Naive thymus-derived CD4-positive, alpha-beta T cell (primary cell): ENCODE measurements at regions of chr1 and their contacts with region 1.

Region 1: DNA sequence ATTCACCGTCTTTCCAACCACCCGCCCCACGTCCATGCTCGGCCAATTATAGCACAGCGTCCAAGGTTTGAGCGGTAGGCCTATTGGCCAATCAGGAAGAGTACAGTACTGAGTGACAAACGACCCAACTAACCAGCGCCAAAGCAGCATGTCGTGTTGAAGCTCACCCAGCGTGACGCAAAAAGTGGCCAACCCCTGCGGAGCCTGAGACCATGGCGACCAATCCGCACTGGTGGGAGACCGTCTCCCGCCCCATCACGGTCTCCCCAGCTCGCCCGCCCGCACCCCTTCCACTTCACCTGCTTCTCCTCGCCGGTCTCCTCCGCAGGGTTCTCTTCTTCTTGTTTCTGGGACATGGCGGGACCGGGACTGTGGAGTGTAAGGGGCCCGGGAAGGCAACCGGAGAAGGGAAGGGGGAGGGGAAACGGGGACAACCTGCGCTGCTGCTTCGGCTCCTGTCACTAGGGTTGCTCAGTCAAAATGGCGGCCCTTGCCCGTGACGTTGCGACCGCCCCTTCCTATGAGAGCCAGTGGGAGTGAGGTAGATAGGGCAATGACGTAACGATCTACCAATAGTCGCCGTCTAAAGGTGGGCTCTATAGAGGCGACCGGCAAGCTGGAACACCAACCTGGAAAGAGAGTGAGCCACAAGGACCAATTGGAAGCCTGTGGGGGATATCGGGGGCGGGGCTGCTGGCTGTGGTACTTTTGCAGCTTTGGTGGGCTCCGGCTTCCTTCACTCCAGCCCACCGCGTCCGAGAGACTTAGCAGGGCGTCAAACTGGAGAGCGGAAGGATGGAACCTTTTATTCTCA is at the start of gene ENSA:
- DNase-seq: peak; percentile 85 to 99 (median 98)
- ATAC-seq: peak; percentile 91
- H3K4me3 ChIP-seq: peak within 1 kb of the TSS; percentile 88
- H3K4me3 Mint-ChIP-seq: no peak within 1 kb of the TSS
- H3K27ac ChIP-seq: peak within 1 kb of the TSS; percentile 98
- H3K27ac Mint-ChIP-seq: peak within 1 kb of the TSS in 2 of 9 donors; percentile 4 to 71
- H3K4me1 ChIP-seq: peaks cover 15 to 18% of the 10 kb centered on the region in 2 donors
- H3K4me1 Mint-ChIP-seq: peaks cover 0 to 40% (median 17%) of the 10 kb centered on the region in 7 donors
- H3K27me3 ChIP-seq: no peaks in the 10 kb centered on the region
- H3K27me3 Mint-ChIP-seq: no peaks in the 10 kb centered on the region
- total RNA-seq, gene ENSA: 97.2 to 178 (median 157) TPM

Region 2: DNA sequence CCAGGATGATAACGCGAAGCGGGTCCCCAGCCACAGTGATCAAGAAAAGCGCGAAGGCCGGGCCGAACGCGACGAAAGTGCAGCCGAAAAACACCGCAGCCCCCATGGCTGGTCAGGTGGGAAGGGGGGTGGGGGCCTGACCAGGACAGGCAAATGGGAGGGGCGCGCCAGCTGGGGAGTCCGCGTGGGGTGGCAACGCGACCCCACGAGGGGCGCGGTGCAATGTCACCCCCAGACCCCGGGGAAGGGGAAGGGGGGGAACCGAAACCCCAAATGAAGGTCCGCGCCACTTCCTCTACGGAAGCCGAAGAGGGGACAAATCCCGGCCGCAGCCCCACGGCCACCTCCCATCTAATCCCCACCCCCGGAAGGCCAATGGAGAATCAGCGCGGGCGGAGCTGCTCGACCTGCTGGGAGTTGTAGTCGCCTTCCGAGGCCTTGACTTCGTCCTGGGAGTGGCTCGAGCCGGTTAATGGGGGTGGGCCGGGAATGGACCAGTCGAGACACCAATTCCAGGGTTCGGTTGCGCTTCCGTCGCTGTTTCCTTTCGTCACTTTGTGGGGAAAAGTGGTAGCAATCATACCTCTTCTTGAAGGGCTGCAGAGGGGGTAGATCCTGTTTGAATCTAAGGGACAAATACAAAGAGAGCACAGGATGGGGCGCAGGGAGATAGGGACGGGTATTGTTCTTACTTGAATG is 360.5 kb before region 1 on chr1 and contains the start of gene APH1A:
- CTCF ChIA-PET with region 1: no interaction called
- POLR2A ChIA-PET with region 1: no interaction called
- intact Hi-C with region 1: loop called in 1 of 2 experiments (anchors 2 kb)
- DNase-seq: peak; percentile 69 to 92 (median 89)
- ATAC-seq: peak; percentile 97
- H3K4me3 ChIP-seq: peak within 1 kb of the TSS; percentile 87
- H3K4me3 Mint-ChIP-seq: peak within 1 kb of the TSS; percentile 94 to 99 (median 96)
- H3K27ac ChIP-seq: peak within 1 kb of the TSS; percentile 97
- H3K27ac Mint-ChIP-seq: peak within 1 kb of the TSS; percentile 88 to 99 (median 94)
- H3K4me1 ChIP-seq: peaks cover 13 to 20% of the 10 kb centered on the region in 2 donors
- H3K4me1 Mint-ChIP-seq: peaks cover 25 to 39% (median 30%) of the 10 kb centered on the region in 7 donors
- H3K27me3 ChIP-seq: no peaks in the 10 kb centered on the region
- H3K27me3 Mint-ChIP-seq: no peaks in the 10 kb centered on the region
- total RNA-seq, gene APH1A: 112 to 143 (median 127) TPM

Region 3: DNA sequence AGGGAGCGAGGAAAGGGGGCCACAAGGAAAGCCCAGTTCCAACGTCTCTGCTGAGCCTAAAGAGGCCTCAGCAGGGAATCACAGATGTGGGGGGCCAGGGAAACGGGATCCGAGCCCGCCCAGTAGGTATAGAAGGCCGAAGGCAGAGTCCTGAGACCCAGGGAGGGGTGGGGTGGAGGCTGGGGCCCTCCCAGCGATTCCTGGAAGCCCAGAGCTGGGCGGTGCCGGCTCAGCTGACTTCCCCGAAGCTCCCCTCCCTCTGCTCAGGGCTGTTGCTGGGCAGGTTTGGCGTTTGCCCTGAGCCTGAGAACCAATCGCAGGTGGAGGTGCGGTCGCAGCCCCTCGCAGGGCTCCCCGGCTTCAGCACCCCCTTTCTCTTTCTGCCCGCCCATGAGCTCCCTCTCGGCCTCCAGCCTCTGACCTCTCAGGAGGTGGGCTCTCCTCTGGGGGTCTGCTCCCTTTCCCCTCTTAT is 67.3 kb before region 1 on chr1:
- CTCF ChIA-PET with region 1: interaction called, 272 read pairs
- POLR2A ChIA-PET with region 1: interaction called, 254 read pairs
- intact Hi-C with region 1: loop called (anchors 1 to 2 kb)
- DNase-seq: peak; percentile 67 to 89 (median 83)
- ATAC-seq: peak; percentile 58
- H3K4me3 ChIP-seq: peak overlapping the region; percentile 95
- H3K4me3 Mint-ChIP-seq: peak overlapping the region; percentile 87 to 99 (median 97)
- H3K27ac ChIP-seq: peak overlapping the region; percentile 97
- H3K27ac Mint-ChIP-seq: peak overlapping the region; percentile 94 to 100 (median 98)
- H3K4me1 ChIP-seq: peaks cover 47 to 57% of the 10 kb centered on the region in 2 donors
- H3K4me1 Mint-ChIP-seq: peaks cover 26 to 59% (median 51%) of the 10 kb centered on the region in 7 donors
- H3K27me3 ChIP-seq: no peaks in the 10 kb centered on the region
- H3K27me3 Mint-ChIP-seq: no peaks in the 10 kb centered on the region

Region 4: DNA sequence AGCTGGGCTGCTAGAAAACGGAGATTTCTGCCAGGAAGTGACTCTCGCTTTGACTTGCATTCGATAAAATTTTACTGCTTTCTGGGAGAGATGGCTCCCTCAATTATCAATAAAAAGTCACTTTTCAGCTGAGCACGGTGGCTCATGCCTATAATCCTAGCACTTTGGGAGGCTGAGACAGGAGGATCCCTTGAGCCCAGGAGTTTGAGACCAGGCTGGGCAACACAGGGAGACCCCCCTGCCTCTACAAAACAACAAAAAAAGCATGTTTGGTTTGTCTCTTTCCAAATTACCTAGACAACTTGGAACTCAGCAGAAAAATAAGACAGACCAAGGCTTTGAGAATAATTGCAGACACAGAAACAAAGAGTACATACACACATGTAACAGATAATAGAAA is 13.0 kb after region 1 on chr1:
- CTCF ChIA-PET with region 1: no interaction called
- POLR2A ChIA-PET with region 1: interaction called, 10 read pairs
- intact Hi-C with region 1: no loop called
- DNase-seq: no peak
- ATAC-seq: no peak
- H3K4me3 ChIP-seq: no peak overlapping the region
- H3K4me3 Mint-ChIP-seq: no peak overlapping the region
- H3K27ac ChIP-seq: no peak overlapping the region
- H3K27ac Mint-ChIP-seq: no peak overlapping the region
- H3K4me1 ChIP-seq: no peaks in the 10 kb centered on the region
- H3K4me1 Mint-ChIP-seq: no peaks in the 10 kb centered on the region
- H3K27me3 ChIP-seq: no peaks in the 10 kb centered on the region
- H3K27me3 Mint-ChIP-seq: no peaks in the 10 kb centered on the region

Region 5: GRCh38 chr1:150674881-150675280 is 45.6 kb after region 1 on chr1:
- CTCF ChIA-PET with region 1: no interaction called
- POLR2A ChIA-PET with region 1: no interaction called
- intact Hi-C with region 1: no loop called
- DNase-seq: no peak
- ATAC-seq: no peak
- H3K4me3 ChIP-seq: no peak overlapping the region
- H3K4me3 Mint-ChIP-seq: no peak overlapping the region
- H3K27ac ChIP-seq: no peak overlapping the region
- H3K27ac Mint-ChIP-seq: peak overlapping the region in 1 of 9 donors; percentile 65
- H3K4me1 ChIP-seq: no peaks in the 10 kb centered on the region
- H3K4me1 Mint-ChIP-seq: peaks cover 0 to 8% (median 6%) of the 10 kb centered on the region in 7 donors
- H3K27me3 ChIP-seq: no peaks in the 10 kb centered on the region
- H3K27me3 Mint-ChIP-seq: no peaks in the 10 kb centered on the region

Region 6: DNA sequence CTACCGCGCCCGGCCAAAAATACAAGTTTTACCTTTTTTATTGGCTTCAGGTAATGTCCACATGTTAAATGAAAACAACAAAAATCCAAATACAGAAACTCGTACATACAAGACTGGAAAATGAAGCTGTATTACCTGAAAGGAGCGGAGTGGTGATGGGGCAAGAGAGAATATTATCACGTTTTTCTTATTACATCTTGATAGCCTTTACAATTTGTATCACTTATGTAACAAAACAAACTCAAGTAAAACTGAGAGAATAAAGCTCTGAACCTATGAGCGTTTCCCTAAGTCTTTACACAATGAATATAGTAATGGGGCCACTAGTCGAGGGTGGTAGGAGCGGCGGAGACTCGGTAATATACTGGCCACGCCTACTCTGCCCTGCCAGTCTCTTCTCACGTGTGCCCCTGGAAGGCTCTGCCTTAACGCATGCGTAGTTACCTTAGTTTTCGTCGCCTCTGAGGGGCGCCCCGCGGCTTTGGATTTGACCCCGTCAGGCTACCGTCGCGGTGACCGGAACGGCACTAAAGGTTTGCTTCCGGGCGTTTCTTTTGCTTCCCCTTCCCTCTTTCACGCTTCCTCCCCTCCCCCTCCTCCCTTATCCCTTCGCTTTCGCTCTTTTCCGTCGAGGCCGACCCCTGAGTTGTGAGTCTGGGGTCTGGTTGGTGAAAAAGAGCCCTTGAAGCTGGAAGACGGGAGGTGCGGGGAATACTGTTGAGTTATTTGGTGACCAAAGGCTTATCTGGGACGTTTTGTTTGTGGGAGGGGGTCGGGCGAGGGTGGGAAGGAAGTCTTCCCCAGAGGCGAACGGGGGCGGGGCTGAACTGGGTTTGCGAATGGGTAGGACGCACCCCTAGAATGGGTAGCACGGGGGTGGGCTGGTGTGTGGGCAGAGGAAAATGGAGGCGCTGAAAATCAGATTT is 296.8 kb after region 1 on chr1 and contains the start of gene SETDB1:
- CTCF ChIA-PET with region 1: no interaction called
- POLR2A ChIA-PET with region 1: no interaction called
- intact Hi-C with region 1: loop called (anchors 1 to 5 kb)
- DNase-seq: peak; percentile 69 to 93 (median 90)
- ATAC-seq: peak; percentile 98
- H3K4me3 ChIP-seq: peak within 1 kb of the TSS; percentile 92
- H3K4me3 Mint-ChIP-seq: peak within 1 kb of the TSS; percentile 92 to 97 (median 94)
- H3K27ac ChIP-seq: peak within 1 kb of the TSS; percentile 91
- H3K27ac Mint-ChIP-seq: peak within 1 kb of the TSS; percentile 92 to 99 (median 95)
- H3K4me1 ChIP-seq: peaks cover 0 to 7% of the 10 kb centered on the region in 2 donors
- H3K4me1 Mint-ChIP-seq: peaks cover 15 to 35% (median 27%) of the 10 kb centered on the region in 7 donors
- H3K27me3 ChIP-seq: no peaks in the 10 kb centered on the region
- H3K27me3 Mint-ChIP-seq: no peaks in the 10 kb centered on the region
- total RNA-seq, gene SETDB1: 57.3 to 94.9 (median 61.7) TPM

Region 7: GRCh38 chr1:151281969-151282882 is 652.9 kb after region 1 on chr1 and contains the start of gene ZNF687:
- CTCF ChIA-PET with region 1: no interaction called
- POLR2A ChIA-PET with region 1: no interaction called
- intact Hi-C with region 1: loop called in 1 of 2 experiments (anchors 1 kb)
- DNase-seq: peak; percentile 93 to 99 (median 99)
- ATAC-seq: peak; percentile 91
- H3K4me3 ChIP-seq: peak within 1 kb of the TSS; percentile 96
- H3K4me3 Mint-ChIP-seq: peak within 1 kb of the TSS; percentile 93 to 100 (median 97)
- H3K27ac ChIP-seq: peak within 1 kb of the TSS; percentile 87
- H3K27ac Mint-ChIP-seq: peak within 1 kb of the TSS; percentile 92 to 100 (median 96)
- H3K4me1 ChIP-seq: peaks cover 10 to 11% of the 10 kb centered on the region in 2 donors
- H3K4me1 Mint-ChIP-seq: peaks cover 20 to 42% (median 27%) of the 10 kb centered on the region in 7 donors
- H3K27me3 ChIP-seq: no peaks in the 10 kb centered on the region
- H3K27me3 Mint-ChIP-seq: no peaks in the 10 kb centered on the region
- total RNA-seq, gene ZNF687: 30.4 to 38.1 (median 32.3) TPM